CD8-positive, alpha-beta T cell (primary cell): ENCODE measurements at regions of chr14 and their contacts with region 1.

Region 1: GRCh38 chr14:91367173-91368171 is 50.1 kb downstream of the CCDC88C start:
- DNase-seq: peak in 7 of 9 experiments; percentile 41 to 96 (median 77)
- ATAC-seq: peak; percentile 77
- H3K4me3 ChIP-seq: peak overlapping the region; percentile 18 to 42
- H3K4me3 Mint-ChIP-seq: peak overlapping the region; percentile 73
- H3K27ac ChIP-seq: peak overlapping the region; percentile 67 to 79
- H3K27ac Mint-ChIP-seq: peak overlapping the region; percentile 93
- H3K4me1 ChIP-seq: peaks cover 97% of the 10 kb centered on the region
- H3K4me1 Mint-ChIP-seq: peaks cover 86% of the 10 kb centered on the region
- H3K27me3 ChIP-seq: no peaks in the 10 kb centered on the region
- H3K27me3 Mint-ChIP-seq: no peaks in the 10 kb centered on the region
- CTCF ChIP-seq: no peak

Region 2: DNA sequence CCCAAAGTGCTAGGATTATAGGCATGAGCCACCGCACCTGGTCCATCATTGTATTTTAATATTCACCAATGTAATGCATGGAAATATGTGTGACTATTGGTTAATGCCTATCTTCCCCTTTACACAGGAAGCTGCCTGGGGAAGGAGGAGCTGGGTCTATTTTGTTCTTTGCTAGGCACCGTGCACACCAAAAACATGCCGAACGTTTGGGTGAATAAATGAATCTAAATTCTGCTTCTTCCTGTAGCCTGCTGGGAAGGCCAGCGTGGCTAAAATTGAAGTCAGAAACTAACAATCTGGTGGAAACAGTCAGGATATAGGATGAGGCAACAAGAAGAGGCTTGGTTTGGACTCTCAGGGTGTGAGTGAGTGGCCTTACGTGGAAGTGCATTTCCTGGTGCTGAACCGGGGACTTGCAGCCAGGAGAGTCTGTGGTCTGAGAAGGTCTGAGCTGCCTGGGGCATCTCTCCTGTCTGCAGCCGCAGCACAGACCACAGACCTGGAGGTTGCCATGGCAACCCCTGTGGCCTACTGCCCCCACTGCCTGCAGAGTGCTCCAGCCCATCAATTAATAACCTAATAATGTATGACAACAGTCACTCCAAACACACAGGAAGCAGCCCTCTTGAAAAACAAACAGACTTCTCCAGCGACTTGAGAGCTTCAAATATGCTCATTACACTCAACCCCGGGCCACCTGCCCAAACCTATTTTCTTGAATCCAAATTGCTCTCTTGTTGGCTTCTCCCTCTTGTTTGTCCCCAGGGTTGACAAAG is 117.4 kb before region 1 on chr14:
- CTCF ChIA-PET with region 1: no interaction called
- POLR2A ChIA-PET with region 1: no interaction called
- intact Hi-C with region 1: no loop called
- DNase-seq: peak in 5 of 9 experiments; percentile 28 to 78 (median 45)
- ATAC-seq: no peak
- H3K4me3 ChIP-seq: no peak overlapping the region
- H3K4me3 Mint-ChIP-seq: peak overlapping the region; percentile 47
- H3K27ac ChIP-seq: peak overlapping the region; percentile 43 to 66
- H3K27ac Mint-ChIP-seq: peak overlapping the region; percentile 92
- H3K4me1 ChIP-seq: peaks cover 70% of the 10 kb centered on the region
- H3K4me1 Mint-ChIP-seq: peaks cover 78% of the 10 kb centered on the region
- H3K27me3 ChIP-seq: no peaks in the 10 kb centered on the region
- H3K27me3 Mint-ChIP-seq: no peaks in the 10 kb centered on the region
- CTCF ChIP-seq: no peak

Region 3: GRCh38 chr14:91383439-91383838 is 16.0 kb after region 1 on chr14:
- CTCF ChIA-PET with region 1: interaction called, 20 read pairs
- POLR2A ChIA-PET with region 1: interaction called, 32 read pairs
- intact Hi-C with region 1: loop called in 1 of 2 experiments (anchors 2 kb)
- DNase-seq: no peak
- ATAC-seq: no peak
- H3K4me3 ChIP-seq: no peak overlapping the region
- H3K4me3 Mint-ChIP-seq: peak overlapping the region; percentile 29
- H3K27ac ChIP-seq: peak overlapping the region in 1 of 2 experiments; percentile 36
- H3K27ac Mint-ChIP-seq: peak overlapping the region; percentile 86
- H3K4me1 ChIP-seq: peaks cover 94% of the 10 kb centered on the region
- H3K4me1 Mint-ChIP-seq: peaks cover 95% of the 10 kb centered on the region
- H3K27me3 ChIP-seq: no peaks in the 10 kb centered on the region
- H3K27me3 Mint-ChIP-seq: no peaks in the 10 kb centered on the region
- CTCF ChIP-seq: no peak